ENCODE measurements at regions of chr12 and their contacts with region 1.

Region 1: DNA sequence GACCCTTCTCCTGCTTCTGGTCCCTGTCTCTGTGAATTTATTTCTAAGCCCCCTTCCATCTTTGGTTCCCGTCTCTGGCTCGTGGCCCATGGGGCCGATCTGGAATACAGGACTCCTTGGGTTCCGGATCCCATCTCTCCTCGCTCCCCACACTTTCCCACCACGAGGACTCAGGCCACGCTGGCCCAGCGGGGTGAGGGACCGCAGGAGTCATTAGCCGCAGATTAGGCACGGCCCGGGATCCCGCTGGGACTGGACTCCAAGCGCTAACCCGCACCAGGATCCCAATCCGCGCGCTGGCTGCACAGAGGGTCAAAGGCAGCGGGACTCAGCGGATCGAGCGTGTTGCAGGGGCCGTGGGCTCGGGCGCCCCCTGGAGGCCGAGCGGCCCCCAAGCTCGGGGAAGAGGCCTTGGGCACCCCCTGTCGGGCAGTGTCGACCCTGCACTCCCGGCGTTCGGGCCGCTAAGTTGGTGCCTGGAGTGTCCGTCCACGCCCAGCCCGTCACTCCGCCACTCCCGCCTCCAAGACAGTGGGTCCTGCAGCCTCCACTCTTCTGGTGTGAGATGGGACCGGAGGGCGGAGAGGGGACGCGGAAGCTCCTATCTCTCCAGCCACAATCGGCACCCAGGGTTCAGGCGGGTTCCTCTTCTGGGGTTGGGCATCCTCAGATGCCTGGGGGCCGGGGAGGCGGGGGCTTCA is 9.5 kb downstream of the SHMT2 start:
- DNase-seq: peak; percentile 85
- H3K4me3 Mint-ChIP-seq: peak overlapping the region; percentile 91
- H3K27ac Mint-ChIP-seq: peak overlapping the region; percentile 62
- H3K4me1 Mint-ChIP-seq: peaks cover 38% of the 10 kb centered on the region
- H3K27me3 Mint-ChIP-seq: peaks cover 39% of the 10 kb centered on the region

Region 2: GRCh38 chr12:57173089-57173488 is 65.9 kb before region 1 on chr12:
- intact Hi-C with region 1: no loop called
- DNase-seq: no peak
- H3K4me3 Mint-ChIP-seq: no peak overlapping the region
- H3K27ac Mint-ChIP-seq: no peak overlapping the region
- H3K4me1 Mint-ChIP-seq: no peaks in the 10 kb centered on the region
- H3K27me3 Mint-ChIP-seq: no peaks in the 10 kb centered on the region

Region 3: DNA sequence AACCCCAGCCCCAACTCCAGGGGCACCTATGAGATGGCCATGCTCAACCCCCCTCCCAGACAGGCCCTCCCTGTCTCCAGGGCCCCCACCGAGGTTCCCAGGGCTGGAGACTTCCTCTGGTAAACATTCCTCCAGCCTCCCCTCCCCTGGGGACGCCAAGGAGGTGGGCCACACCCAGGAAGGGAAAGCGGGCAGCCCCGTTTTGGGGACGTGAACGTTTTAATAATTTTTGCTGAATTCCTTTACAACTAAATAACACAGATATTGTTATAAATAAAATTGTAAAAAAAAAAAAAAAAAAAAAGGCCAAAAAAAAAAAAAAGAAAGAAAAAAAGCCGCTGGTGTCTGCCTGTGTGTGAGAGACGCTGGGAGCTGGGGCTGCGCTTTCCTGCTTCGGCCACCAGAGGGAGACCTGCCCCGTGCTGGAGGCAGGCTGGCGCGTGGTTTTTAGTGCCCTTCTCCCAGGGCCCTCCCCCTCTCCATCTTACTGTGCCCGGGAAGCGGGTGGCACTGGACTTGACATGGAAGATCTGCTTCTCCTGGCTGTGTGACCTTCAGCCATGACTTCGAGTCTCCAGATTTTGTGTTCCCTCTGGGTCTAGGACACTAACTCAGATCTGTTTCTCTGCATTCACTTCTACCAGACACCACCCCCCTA is 25.8 kb before region 1 on chr12:
- intact Hi-C with region 1: loop called (anchors 1 kb)
- DNase-seq: peak; percentile 76
- H3K4me3 Mint-ChIP-seq: no peak overlapping the region
- H3K27ac Mint-ChIP-seq: no peak overlapping the region
- H3K4me1 Mint-ChIP-seq: peaks cover 30% of the 10 kb centered on the region
- H3K27me3 Mint-ChIP-seq: peaks cover 38% of the 10 kb centered on the region

Region 4: DNA sequence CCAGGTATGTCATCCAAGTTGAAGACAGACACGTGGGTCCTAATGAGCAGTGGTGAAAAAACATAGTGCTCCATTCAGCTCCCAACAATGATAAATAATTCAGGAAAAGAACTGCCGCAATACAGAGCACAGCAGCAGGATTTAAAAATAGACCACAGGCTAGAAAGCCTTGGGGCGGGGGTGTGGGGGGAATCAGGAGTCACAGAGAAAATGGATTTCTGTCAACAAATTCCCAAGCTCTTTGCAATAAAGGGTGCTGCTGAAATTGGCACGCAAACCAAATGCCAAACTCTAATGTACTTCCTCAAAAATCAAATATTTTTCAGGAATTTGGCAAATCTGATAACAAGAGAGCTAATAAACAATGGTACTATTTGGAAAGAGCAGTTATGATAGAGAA is 133.2 kb after region 1 on chr12:
- intact Hi-C with region 1: no loop called
- DNase-seq: no peak
- H3K4me3 Mint-ChIP-seq: no peak overlapping the region
- H3K27ac Mint-ChIP-seq: no peak overlapping the region
- H3K4me1 Mint-ChIP-seq: peaks cover 6% of the 10 kb centered on the region
- H3K27me3 Mint-ChIP-seq: no peaks in the 10 kb centered on the region

Region 5: GRCh38 chr12:57621497-57622292 is 382.7 kb after region 1 on chr12:
- intact Hi-C with region 1: loop called (anchors 5 kb)
- DNase-seq: peak; percentile 37
- H3K4me3 Mint-ChIP-seq: peak overlapping the region; percentile 74
- H3K27ac Mint-ChIP-seq: no peak overlapping the region
- H3K4me1 Mint-ChIP-seq: peaks cover 15% of the 10 kb centered on the region
- H3K27me3 Mint-ChIP-seq: peaks cover 89% of the 10 kb centered on the region

Measured in activated T-helper 2 cell treated with anti-CD3 and anti-CD28 coated beads, Interferon-gamma antibody, Interleukin-2, Interleukin-4, amounts not matched to agents 10 μg/mL and 5 μg/mL and 100 μg/mL, durations not matched to agents 14 hours and 24 hours and 36 hours (primary cell).